CD8-positive, alpha-beta T cell (primary cell): ENCODE measurements at regions of chr13 and their contacts with region 1.

Region 1: DNA sequence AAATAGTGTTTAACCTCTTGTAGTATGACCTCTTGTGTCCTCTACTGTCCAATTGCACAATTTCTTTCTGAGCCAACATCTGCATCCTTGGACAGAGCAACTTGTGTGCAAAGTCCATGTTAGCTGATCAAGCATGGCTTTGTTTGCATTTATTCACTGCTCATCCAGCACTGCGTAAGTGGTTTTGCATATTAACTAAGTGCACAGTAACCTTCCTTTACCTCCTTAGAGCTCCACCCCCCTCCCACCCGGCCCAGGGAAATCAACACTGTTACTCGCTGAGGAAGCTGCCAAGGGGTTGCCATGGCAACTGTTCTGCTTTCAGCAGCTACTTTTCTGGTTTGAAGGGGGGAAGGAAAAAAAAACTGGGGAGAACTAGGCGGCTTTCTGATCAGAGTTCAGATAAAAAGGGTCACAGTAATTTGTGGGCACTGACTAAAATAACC is 153.5 kb upstream of the KLF12 start:
- DNase-seq: peak; percentile 64 to 98 (median 85)
- ATAC-seq: peak; percentile 67
- H3K4me3 ChIP-seq: peak overlapping the region; percentile 27 to 35
- H3K4me3 Mint-ChIP-seq: peak overlapping the region; percentile 74
- H3K27ac ChIP-seq: peak overlapping the region; percentile 48 to 82
- H3K27ac Mint-ChIP-seq: peak overlapping the region; percentile 93
- H3K4me1 ChIP-seq: peaks cover 45% of the 10 kb centered on the region
- H3K4me1 Mint-ChIP-seq: peaks cover 62% of the 10 kb centered on the region
- H3K27me3 ChIP-seq: no peaks in the 10 kb centered on the region
- H3K27me3 Mint-ChIP-seq: no peaks in the 10 kb centered on the region
- CTCF ChIP-seq: no peak

Region 2: GRCh38 chr13:73765651-73766384 is 521.9 kb before region 1 on chr13:
- CTCF ChIA-PET with region 1: interaction called, 11 read pairs
- POLR2A ChIA-PET with region 1: interaction called, 12 read pairs
- intact Hi-C with region 1: loop called in 1 of 2 experiments (anchors 2 kb)
- DNase-seq: peak; percentile 65 to 94 (median 86)
- ATAC-seq: peak; percentile 89
- H3K4me3 ChIP-seq: peak overlapping the region; percentile 28 to 56
- H3K4me3 Mint-ChIP-seq: peak overlapping the region; percentile 81
- H3K27ac ChIP-seq: peak overlapping the region; percentile 73 to 86
- H3K27ac Mint-ChIP-seq: peak overlapping the region; percentile 98
- H3K4me1 ChIP-seq: peaks cover 77% of the 10 kb centered on the region
- H3K4me1 Mint-ChIP-seq: peaks cover 85% of the 10 kb centered on the region
- H3K27me3 ChIP-seq: no peaks in the 10 kb centered on the region
- H3K27me3 Mint-ChIP-seq: no peaks in the 10 kb centered on the region
- CTCF ChIP-seq: no peak

Region 3: GRCh38 chr13:73984949-73985691 is 302.6 kb before region 1 on chr13:
- CTCF ChIA-PET with region 1: interaction called, 9 read pairs
- POLR2A ChIA-PET with region 1: interaction called, 4 read pairs
- intact Hi-C with region 1: loop called (anchors 2 kb)
- DNase-seq: peak; percentile 51 to 93 (median 79)
- ATAC-seq: peak; percentile 90
- H3K4me3 ChIP-seq: peak overlapping the region in 1 of 2 experiments; percentile 8
- H3K4me3 Mint-ChIP-seq: peak overlapping the region; percentile 71
- H3K27ac ChIP-seq: peak overlapping the region; percentile 33 to 40
- H3K27ac Mint-ChIP-seq: no peak overlapping the region
- H3K4me1 ChIP-seq: peaks cover 53% of the 10 kb centered on the region
- H3K4me1 Mint-ChIP-seq: peaks cover 43% of the 10 kb centered on the region
- H3K27me3 ChIP-seq: no peaks in the 10 kb centered on the region
- H3K27me3 Mint-ChIP-seq: no peaks in the 10 kb centered on the region
- CTCF ChIP-seq: no peak

Region 4: DNA sequence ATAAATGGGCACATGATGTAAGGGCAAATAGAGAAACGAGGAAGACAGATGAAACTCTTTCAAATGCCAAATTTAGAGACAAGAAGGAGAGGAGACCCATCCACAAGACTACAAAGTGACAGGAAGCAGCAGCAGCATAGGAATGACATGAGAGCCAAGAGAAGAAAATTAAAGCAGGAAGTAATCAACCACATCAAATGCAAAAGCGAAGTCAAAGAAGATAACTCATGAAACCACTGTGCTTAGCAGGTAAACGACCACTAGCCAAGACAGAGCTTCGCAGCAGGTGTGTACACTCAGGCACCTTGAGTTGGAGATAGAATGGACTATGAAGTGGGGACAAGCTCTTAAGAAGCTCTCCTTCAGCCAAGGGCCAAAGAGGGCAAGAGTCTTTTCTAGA is 217.7 kb before region 1 on chr13:
- CTCF ChIA-PET with region 1: interaction called, 3 read pairs
- POLR2A ChIA-PET with region 1: interaction called, 10 read pairs
- intact Hi-C with region 1: loop called in 1 of 2 experiments (anchors 5 kb)
- DNase-seq: peak in 6 of 9 experiments; percentile 7 to 79 (median 47)
- ATAC-seq: peak; percentile 75
- H3K4me3 ChIP-seq: peak overlapping the region; percentile 7 to 14
- H3K4me3 Mint-ChIP-seq: peak overlapping the region; percentile 70
- H3K27ac ChIP-seq: peak overlapping the region in 1 of 2 experiments; percentile 69
- H3K27ac Mint-ChIP-seq: peak overlapping the region; percentile 89
- H3K4me1 ChIP-seq: peaks cover 50% of the 10 kb centered on the region
- H3K4me1 Mint-ChIP-seq: peaks cover 78% of the 10 kb centered on the region
- H3K27me3 ChIP-seq: no peaks in the 10 kb centered on the region
- H3K27me3 Mint-ChIP-seq: no peaks in the 10 kb centered on the region
- CTCF ChIP-seq: no peak

Region 5: DNA sequence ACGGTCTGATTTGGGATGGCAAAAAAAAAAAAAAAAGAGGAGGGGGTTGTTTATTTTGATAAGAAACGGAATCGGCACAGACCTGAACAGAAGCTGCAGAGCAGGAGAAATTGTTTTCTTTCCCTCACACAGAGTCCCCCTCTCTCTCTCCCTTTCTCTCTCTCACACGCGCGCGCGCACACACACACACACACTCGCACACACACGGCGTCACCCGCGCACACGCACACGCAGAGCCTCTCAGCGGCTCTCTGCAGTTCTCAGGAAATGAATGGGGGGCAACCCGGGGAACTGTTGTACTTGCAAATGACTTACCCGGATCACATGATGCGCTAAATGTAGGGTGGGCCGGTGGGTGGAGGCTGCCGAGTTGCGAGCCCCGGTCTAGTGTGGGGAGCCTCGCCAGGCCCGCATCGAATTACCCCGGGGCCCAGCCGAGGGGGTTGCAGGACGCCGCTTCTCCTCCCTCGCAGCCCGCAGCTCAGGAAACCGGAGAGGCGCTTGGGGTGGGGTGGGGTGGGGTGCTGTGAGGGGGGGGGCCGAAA is 154.0 kb before region 1 on chr13:
- CTCF ChIA-PET with region 1: interaction called, 128 read pairs
- POLR2A ChIA-PET with region 1: interaction called, 104 read pairs
- intact Hi-C with region 1: loop called (anchors 1 kb)
- DNase-seq: peak; percentile 81 to 98 (median 91)
- ATAC-seq: peak; percentile 62
- H3K4me3 ChIP-seq: peak overlapping the region; percentile 80 to 95
- H3K4me3 Mint-ChIP-seq: peak overlapping the region; percentile 95
- H3K27ac ChIP-seq: peak overlapping the region; percentile 82 to 98
- H3K27ac Mint-ChIP-seq: peak overlapping the region; percentile 99
- H3K4me1 ChIP-seq: peaks cover 32% of the 10 kb centered on the region
- H3K4me1 Mint-ChIP-seq: peaks cover 34% of the 10 kb centered on the region
- H3K27me3 ChIP-seq: no peaks in the 10 kb centered on the region
- H3K27me3 Mint-ChIP-seq: no peaks in the 10 kb centered on the region
- CTCF ChIP-seq: no peak

Region 6: GRCh38 chr13:74251778-74252519 is 35.8 kb before region 1 on chr13:
- CTCF ChIA-PET with region 1: interaction called, 22 read pairs
- POLR2A ChIA-PET with region 1: interaction called, 4 read pairs
- intact Hi-C with region 1: no loop called
- DNase-seq: peak in 2 of 9 experiments; percentile 23 to 33
- ATAC-seq: no peak
- H3K4me3 ChIP-seq: no peak overlapping the region
- H3K4me3 Mint-ChIP-seq: peak overlapping the region; percentile 44
- H3K27ac ChIP-seq: peak overlapping the region in 1 of 2 experiments; percentile 41
- H3K27ac Mint-ChIP-seq: peak overlapping the region; percentile 88
- H3K4me1 ChIP-seq: peaks cover 69% of the 10 kb centered on the region
- H3K4me1 Mint-ChIP-seq: peaks cover 89% of the 10 kb centered on the region
- H3K27me3 ChIP-seq: no peaks in the 10 kb centered on the region
- H3K27me3 Mint-ChIP-seq: no peaks in the 10 kb centered on the region
- CTCF ChIP-seq: no peak